ENCODE measurements at regions of chr3 and their contacts with region 1.

Region 1: DNA sequence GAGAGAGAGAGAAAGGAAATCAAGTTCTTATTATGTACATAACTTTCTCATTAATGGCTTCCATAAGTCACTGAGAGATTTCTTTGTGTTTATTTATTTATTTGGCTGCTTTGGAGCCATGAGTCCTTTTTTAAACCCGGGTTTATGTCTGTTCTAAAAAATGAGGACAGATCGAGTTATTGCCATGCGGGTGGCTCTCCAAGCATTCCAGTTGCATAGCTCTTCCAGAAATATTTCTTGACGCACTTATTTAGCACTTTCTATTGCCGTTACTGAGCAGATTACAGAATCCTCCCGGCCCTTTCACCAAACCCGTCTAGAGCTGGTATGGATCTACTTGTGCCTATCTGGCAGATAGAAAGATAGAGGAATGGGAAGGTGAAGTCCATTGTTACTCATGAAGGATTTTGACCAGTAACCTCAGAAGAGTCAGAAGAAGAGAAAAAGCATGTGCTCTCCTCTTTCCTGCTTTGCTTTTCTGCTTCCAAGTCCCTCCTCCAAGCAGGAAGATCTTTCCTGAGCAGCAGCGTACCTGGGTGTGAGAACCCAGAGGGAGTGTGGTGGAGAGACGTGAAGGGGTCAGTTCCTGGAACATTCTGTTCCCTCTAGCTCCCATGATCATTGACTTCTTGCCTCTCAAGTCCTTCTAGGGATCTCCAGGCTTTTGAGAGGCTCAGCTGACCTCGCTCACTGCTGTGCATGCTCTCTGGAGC is 112.8 kb downstream of the LPP start:
- DNase-seq: peak; percentile 23
- H3K4me3 ChIP-seq: peak overlapping the region in 1 of 2 donors; percentile 5
- H3K27ac ChIP-seq: peak overlapping the region; percentile 73 to 85
- H3K4me1 ChIP-seq: peaks cover 33% of the 10 kb centered on the region
- H3K27me3 ChIP-seq: no peaks in the 10 kb centered on the region
- CTCF ChIP-seq: no peak
- POLR2A ChIP-seq: no peak

Region 2: DNA sequence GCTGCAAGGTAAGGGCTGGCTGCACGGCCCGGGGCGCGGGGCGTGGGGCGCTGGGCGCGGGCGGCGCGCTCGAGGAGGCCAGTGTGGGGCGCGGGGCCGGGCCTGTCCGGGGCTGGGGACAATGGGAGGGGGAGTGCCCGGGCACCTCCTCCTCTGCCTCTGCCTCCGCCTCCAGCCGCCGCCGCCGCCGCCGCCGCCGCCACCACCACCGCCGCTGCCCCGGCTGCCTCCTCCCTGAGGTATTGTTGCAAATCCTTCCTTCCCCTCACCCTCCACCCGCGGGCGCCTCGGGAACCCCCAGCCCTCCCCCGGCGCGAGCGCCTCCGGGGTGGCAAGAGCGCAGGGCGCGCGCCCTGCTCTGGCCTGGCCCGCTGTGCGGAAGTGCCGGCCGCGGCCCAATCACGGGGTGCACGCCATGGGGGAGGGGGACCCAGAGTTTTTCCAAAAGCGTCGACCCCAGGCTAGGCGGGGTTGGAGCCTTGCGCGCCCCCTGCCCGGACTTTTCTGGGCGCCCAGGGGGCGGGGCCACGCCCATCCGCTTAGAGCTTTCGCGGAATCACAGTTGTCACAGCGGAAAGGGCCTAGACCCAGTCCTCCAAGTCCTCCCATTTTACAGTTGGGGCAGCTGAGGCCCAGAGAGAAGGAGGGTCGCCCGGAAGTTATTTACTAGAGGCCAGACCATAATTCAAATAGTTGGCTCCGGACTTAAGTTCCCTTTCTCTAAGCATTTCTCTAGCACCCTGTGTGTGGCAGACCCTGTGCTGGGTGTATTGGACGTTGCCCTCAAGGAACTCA is 112.5 kb before region 1 on chr3 and contains the start of gene LPP:
- intact Hi-C with region 1: loop called (anchors 2 kb)
- DNase-seq: peak; percentile 73
- H3K4me3 ChIP-seq: peak within 1 kb of the TSS; percentile 59 to 81
- H3K27ac ChIP-seq: peak within 1 kb of the TSS; percentile 91 to 93
- H3K4me1 ChIP-seq: peaks cover 11% of the 10 kb centered on the region
- H3K27me3 ChIP-seq: no peaks in the 10 kb centered on the region
- CTCF ChIP-seq: peak in 1 of 4 experiments; percentile 10
- POLR2A ChIP-seq: peak; percentile 14
- total RNA-seq, gene LPP: 219 to 248 TPM

Region 3: GRCh38 chr3:188220988-188221818 is 45.5 kb before region 1 on chr3:
- intact Hi-C with region 1: loop called (anchors 5 kb)
- DNase-seq: no peak
- H3K4me3 ChIP-seq: no peak overlapping the region
- H3K27ac ChIP-seq: peak overlapping the region; percentile 67 to 80
- H3K4me1 ChIP-seq: no peaks in the 10 kb centered on the region
- H3K27me3 ChIP-seq: no peaks in the 10 kb centered on the region
- CTCF ChIP-seq: no peak
- POLR2A ChIP-seq: no peak

Region 4: DNA sequence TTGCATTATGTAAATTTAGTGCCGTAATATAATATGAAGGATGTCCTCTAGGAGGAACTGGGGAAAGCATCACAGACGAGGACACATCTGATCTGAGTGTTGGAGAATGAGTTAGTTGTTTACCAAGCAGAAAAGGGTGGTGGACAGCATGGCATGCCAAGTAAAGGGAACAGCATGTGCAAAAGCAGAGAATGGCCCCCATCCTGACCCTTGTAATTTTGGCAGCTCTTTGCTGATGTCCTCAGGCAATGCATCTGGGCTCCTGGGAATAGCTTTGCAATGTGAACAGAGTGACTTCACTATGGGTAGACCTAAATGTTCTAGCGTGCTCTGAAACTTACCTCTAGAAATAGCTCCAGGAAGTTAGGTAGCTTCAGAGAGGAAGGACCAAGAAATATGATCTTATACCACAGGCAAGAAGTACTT is 150.6 kb after region 1 on chr3:
- intact Hi-C with region 1: no loop called
- DNase-seq: no peak
- H3K4me3 ChIP-seq: no peak overlapping the region
- H3K27ac ChIP-seq: no peak overlapping the region
- H3K4me1 ChIP-seq: peaks cover 3% of the 10 kb centered on the region
- H3K27me3 ChIP-seq: no peaks in the 10 kb centered on the region
- CTCF ChIP-seq: no peak
- POLR2A ChIP-seq: no peak

Region 5: GRCh38 chr3:188746291-188746783 is 479.6 kb after region 1 on chr3:
- intact Hi-C with region 1: no loop called
- DNase-seq: no peak
- H3K4me3 ChIP-seq: no peak overlapping the region
- H3K27ac ChIP-seq: no peak overlapping the region
- H3K4me1 ChIP-seq: no peaks in the 10 kb centered on the region
- H3K27me3 ChIP-seq: no peaks in the 10 kb centered on the region
- CTCF ChIP-seq: no peak
- POLR2A ChIP-seq: no peak

Region 6: GRCh38 chr3:188947401-188948280 is 680.9 kb after region 1 on chr3:
- intact Hi-C with region 1: loop called (anchors 2 kb)
- DNase-seq: peak; percentile 99
- H3K4me3 ChIP-seq: peak overlapping the region; percentile 24 to 30
- H3K27ac ChIP-seq: peak overlapping the region; percentile 90
- H3K4me1 ChIP-seq: peaks cover 9% of the 10 kb centered on the region
- H3K27me3 ChIP-seq: no peaks in the 10 kb centered on the region
- CTCF ChIP-seq: peak in 2 of 4 experiments; percentile 52 to 61
- POLR2A ChIP-seq: peak; percentile 45